Endothelial cell of umbilical vein (primary cell): ENCODE measurements at regions of chr1 and their contacts with region 1.

Region 1: GRCh38 chr1:157490467-157491165 is 61.7 kb downstream of the FCRL5 start:
- DNase-seq: peak; percentile 58
- H3K4me3 ChIP-seq: no peak overlapping the region
- H3K27ac ChIP-seq: no peak overlapping the region
- H3K4me1 ChIP-seq: no peaks in the 10 kb centered on the region
- H3K27me3 ChIP-seq: peaks cover 0 to 6% of the 10 kb centered on the region in 2 experiments
- CTCF ChIP-seq: peak; percentile 62 to 76
- POLR2A ChIP-seq: no peak

Region 2: GRCh38 chr1:157193702-157194391 is 296.8 kb before region 1 on chr1:
- CTCF ChIA-PET with region 1: interaction called, 35 read pairs
- POLR2A ChIA-PET with region 1: no interaction called
- dilution Hi-C with region 1: no loop called
- intact Hi-C with region 1: loop called (anchors 1 kb)
- DNase-seq: peak; percentile 61
- H3K4me3 ChIP-seq: no peak overlapping the region
- H3K27ac ChIP-seq: no peak overlapping the region
- H3K4me1 ChIP-seq: no peaks in the 10 kb centered on the region
- H3K27me3 ChIP-seq: peaks cover 17% of the 10 kb centered on the region in 2 experiments
- CTCF ChIP-seq: peak; percentile 73 to 75
- POLR2A ChIP-seq: no peak

Region 3: GRCh38 chr1:157369808-157370521 is 120.7 kb before region 1 on chr1:
- CTCF ChIA-PET with region 1: interaction called, 57 read pairs
- POLR2A ChIA-PET with region 1: no interaction called
- dilution Hi-C with region 1: no loop called
- intact Hi-C with region 1: loop called (anchors 1 kb)
- DNase-seq: peak; percentile 71
- H3K4me3 ChIP-seq: no peak overlapping the region
- H3K27ac ChIP-seq: no peak overlapping the region
- H3K4me1 ChIP-seq: no peaks in the 10 kb centered on the region
- H3K27me3 ChIP-seq: peaks cover 2 to 3% of the 10 kb centered on the region in 2 experiments
- CTCF ChIP-seq: peak; percentile 70 to 77
- POLR2A ChIP-seq: no peak

Region 4: DNA sequence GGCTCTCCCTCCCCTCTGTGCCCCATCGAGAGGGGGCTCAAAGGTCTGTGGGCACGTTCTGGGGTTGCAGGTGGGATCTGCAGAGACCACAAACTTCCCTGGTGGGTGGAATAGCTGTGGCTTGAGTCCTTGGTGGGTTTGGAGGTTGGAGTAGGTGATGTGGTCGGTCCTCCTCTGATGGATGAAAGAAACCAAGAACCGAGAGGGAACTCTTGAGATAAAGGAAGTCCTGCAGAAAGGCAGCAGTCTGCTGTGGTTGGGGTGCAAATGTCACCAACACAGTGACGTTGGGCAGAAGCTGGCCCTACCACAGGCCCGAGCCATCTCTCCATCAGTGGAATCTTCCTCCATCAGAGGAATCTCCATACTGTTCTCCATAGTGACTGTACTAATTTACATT is 110.1 kb before region 1 on chr1:
- CTCF ChIA-PET with region 1: interaction called, 37 read pairs
- POLR2A ChIA-PET with region 1: no interaction called
- dilution Hi-C with region 1: no loop called
- intact Hi-C with region 1: loop called (anchors 1 kb)
- DNase-seq: no peak
- H3K4me3 ChIP-seq: no peak overlapping the region
- H3K27ac ChIP-seq: no peak overlapping the region
- H3K4me1 ChIP-seq: no peaks in the 10 kb centered on the region
- H3K27me3 ChIP-seq: peaks cover 0 to 1% of the 10 kb centered on the region in 2 experiments
- CTCF ChIP-seq: no peak
- POLR2A ChIP-seq: no peak

Region 5: DNA sequence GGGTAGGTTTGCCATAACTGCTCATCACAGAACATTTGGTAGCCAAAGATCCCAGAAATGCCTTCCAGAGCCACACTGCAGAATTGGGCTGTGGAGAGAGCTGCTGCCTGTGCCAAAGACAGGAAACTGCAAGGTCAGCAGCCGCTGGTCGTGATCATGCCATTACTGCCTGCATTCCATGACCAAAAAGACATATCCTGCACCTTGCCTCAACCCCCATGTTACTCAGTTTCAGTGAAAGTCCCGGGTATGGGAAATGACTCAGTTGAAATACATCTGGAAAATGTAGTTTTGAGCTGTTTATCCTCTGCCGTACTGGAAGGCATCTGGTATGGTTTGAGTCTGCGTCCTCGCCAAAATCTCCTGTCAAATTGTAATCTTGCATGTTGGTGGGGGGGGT is 100.0 kb before region 1 on chr1:
- CTCF ChIA-PET with region 1: interaction called, 4 read pairs
- POLR2A ChIA-PET with region 1: interaction called, 3 read pairs
- dilution Hi-C with region 1: no loop called
- intact Hi-C with region 1: loop called (anchors 1 kb)
- DNase-seq: peak; percentile 88
- H3K4me3 ChIP-seq: peak overlapping the region in 1 of 3 experiments; percentile 38
- H3K27ac ChIP-seq: peak overlapping the region; percentile 84
- H3K4me1 ChIP-seq: peaks cover 21% of the 10 kb centered on the region
- H3K27me3 ChIP-seq: no peaks in the 10 kb centered on the region
- CTCF ChIP-seq: no peak
- POLR2A ChIP-seq: no peak

Region 6: DNA sequence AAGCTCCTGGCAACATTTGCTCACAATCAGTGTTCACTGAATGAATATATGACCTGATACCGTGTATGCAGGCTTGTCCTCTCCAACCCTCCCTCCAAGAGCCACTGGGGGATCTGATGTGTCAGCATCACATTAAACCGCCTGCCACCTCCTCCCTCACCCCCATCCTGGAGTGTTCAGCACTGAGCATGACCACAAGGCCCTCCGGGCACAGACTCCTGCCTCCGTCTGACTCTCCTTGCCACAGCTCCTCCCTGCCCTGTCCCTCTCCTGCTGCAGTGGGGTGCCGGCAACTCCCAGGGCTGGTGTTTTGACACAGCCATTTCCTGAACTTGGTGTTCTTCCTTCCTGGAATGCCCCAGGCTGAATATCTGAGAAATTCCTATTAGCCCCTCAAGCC is 75.0 kb before region 1 on chr1:
- CTCF ChIA-PET with region 1: no interaction called
- POLR2A ChIA-PET with region 1: no interaction called
- dilution Hi-C with region 1: no loop called
- intact Hi-C with region 1: no loop called
- DNase-seq: no peak
- H3K4me3 ChIP-seq: no peak overlapping the region
- H3K27ac ChIP-seq: no peak overlapping the region
- H3K4me1 ChIP-seq: peaks cover 11% of the 10 kb centered on the region
- H3K27me3 ChIP-seq: no peaks in the 10 kb centered on the region
- CTCF ChIP-seq: no peak
- POLR2A ChIP-seq: no peak

Region 7: DNA sequence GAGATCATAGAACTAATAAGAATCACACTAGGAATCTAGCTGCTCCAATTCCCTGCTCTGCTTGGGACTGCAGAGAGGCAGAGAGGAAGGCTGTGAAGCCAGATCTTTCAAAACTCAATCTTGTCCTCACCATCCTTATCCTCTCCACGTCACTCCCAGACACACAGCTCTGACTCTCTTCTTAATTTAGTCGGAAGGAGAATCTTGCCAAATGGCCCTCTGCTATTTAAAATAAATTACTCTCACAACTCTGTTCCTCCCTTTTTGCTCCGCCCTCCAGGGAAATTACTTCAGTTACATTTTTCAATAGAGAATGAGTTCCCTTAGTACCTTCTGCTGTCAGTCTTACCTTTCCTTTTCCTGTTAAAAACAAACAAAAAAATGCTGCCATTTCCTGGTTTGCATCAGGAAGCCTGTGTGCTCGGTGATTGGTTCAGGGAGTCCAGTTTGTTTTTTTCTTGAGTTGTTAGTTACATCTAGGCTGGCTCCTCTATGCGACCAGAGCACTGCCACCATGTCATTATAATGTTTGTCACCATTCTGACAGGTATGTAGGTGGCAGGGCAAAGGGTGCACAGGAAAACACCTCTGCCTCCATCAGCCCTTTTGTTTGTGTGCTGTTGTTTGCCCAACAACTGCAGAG is 18.4 kb before region 1 on chr1:
- CTCF ChIA-PET with region 1: interaction called, 3 read pairs
- POLR2A ChIA-PET with region 1: no interaction called
- dilution Hi-C with region 1: no loop called
- intact Hi-C with region 1: loop called (anchors 2 kb)
- DNase-seq: no peak
- H3K4me3 ChIP-seq: no peak overlapping the region
- H3K27ac ChIP-seq: no peak overlapping the region
- H3K4me1 ChIP-seq: peaks cover 4% of the 10 kb centered on the region
- H3K27me3 ChIP-seq: peaks cover 2 to 7% of the 10 kb centered on the region in 2 experiments
- CTCF ChIP-seq: no peak
- POLR2A ChIP-seq: no peak

Region 8: GRCh38 chr1:157626099-157626498 is 135.5 kb after region 1 on chr1:
- CTCF ChIA-PET with region 1: no interaction called
- POLR2A ChIA-PET with region 1: no interaction called
- dilution Hi-C with region 1: no loop called
- intact Hi-C with region 1: no loop called
- DNase-seq: no peak
- H3K4me3 ChIP-seq: no peak overlapping the region
- H3K27ac ChIP-seq: no peak overlapping the region
- H3K4me1 ChIP-seq: no peaks in the 10 kb centered on the region
- H3K27me3 ChIP-seq: no peaks in the 10 kb centered on the region
- CTCF ChIP-seq: no peak
- POLR2A ChIP-seq: no peak